GM12878 (cell line): ENCODE measurements at regions of chr16 and their contacts with region 1.

Region 1: GRCh38 chr16:13436641-13437412 is 483.1 kb upstream of the ERCC4 start:
- DNase-seq: peak; percentile 86
- ATAC-seq: peak; percentile 85
- H3K4me3 ChIP-seq: no peak overlapping the region
- H3K27ac ChIP-seq: peak overlapping the region; percentile 46
- H3K4me1 ChIP-seq: peaks cover 25% of the 10 kb centered on the region
- H3K27me3 ChIP-seq: no peaks in the 10 kb centered on the region
- CTCF ChIP-seq: no peak; a peak in 1 of 6 replicates
- EP300 ChIP-seq: peak; percentile 53 to 88; a peak in 3 of 4 replicates
- POLR2A ChIP-seq: no peak
- RAD21 ChIP-seq: peak; percentile 13; the same call in 1 of the 2 replicates

Region 2: DNA sequence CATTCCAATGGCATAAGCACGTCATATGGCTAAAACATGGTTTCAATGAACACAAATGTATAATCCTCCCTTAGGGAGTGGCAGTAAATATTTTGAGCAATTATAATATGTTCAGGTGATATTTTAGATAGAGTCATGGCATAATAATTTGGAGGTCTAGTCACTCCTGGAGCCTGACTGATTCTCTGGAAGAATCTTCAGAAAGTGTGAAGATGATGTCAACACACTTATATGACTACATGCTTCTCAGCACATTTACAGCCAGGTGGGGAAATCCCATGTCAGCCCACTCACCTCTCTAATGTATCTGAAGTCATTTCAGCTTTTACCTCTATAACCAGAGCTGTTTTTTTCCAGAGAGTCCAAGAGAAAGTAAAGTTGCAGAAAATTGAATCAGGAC is 60.7 kb before region 1 on chr16:
- CTCF ChIA-PET with region 1: no interaction called
- POLR2A ChIA-PET with region 1: no interaction called
- RAD21 ChIA-PET with region 1: interaction called, 12 read pairs
- SMC1A ChIA-PET with region 1: interaction called, 9 read pairs
- in situ Hi-C with region 1: no loop called
- intact Hi-C with region 1: no loop called
- DNase-seq: no peak
- ATAC-seq: peak; percentile 84
- H3K4me3 ChIP-seq: no peak overlapping the region
- H3K27ac ChIP-seq: no peak overlapping the region
- H3K4me1 ChIP-seq: no peaks in the 10 kb centered on the region; the same call in 1 of the 2 replicates
- H3K27me3 ChIP-seq: no peaks in the 10 kb centered on the region
- CTCF ChIP-seq: no peak
- EP300 ChIP-seq: peak in 1 of 2 experiments; percentile 29; a peak in 1 of 4 replicates
- POLR2A ChIP-seq: no peak
- RAD21 ChIP-seq: no peak

Region 3: GRCh38 chr16:13426269-13426668 is 10.6 kb before region 1 on chr16:
- CTCF ChIA-PET with region 1: interaction called, 7 read pairs
- POLR2A ChIA-PET with region 1: interaction called, 3 read pairs
- RAD21 ChIA-PET with region 1: interaction called, 4 read pairs
- SMC1A ChIA-PET with region 1: interaction called, 21 read pairs
- in situ Hi-C with region 1: no loop called
- intact Hi-C with region 1: no loop called
- DNase-seq: no peak
- ATAC-seq: peak; percentile 15; the same call in 1 of the 3 replicates
- H3K4me3 ChIP-seq: no peak overlapping the region
- H3K27ac ChIP-seq: no peak overlapping the region
- H3K4me1 ChIP-seq: no peaks in the 10 kb centered on the region; the same call in 1 of the 2 replicates
- H3K27me3 ChIP-seq: no peaks in the 10 kb centered on the region
- CTCF ChIP-seq: peak in 1 of 3 experiments; percentile 10; a peak in 1 of 6 replicates
- EP300 ChIP-seq: no peak
- POLR2A ChIP-seq: no peak
- RAD21 ChIP-seq: peak; percentile 39; the same call in 1 of the 2 replicates

Region 4: GRCh38 chr16:13552062-13552959 is 115.5 kb after region 1 on chr16:
- CTCF ChIA-PET with region 1: interaction called, 4 read pairs
- POLR2A ChIA-PET with region 1: interaction called, 5 read pairs
- RAD21 ChIA-PET with region 1: interaction called, 19 read pairs
- SMC1A ChIA-PET with region 1: interaction called, 12 read pairs
- in situ Hi-C with region 1: no loop called
- intact Hi-C with region 1: no loop called
- DNase-seq: peak; percentile 71
- ATAC-seq: no peak; the same call in 1 of the 3 replicates
- H3K4me3 ChIP-seq: no peak overlapping the region
- H3K27ac ChIP-seq: no peak overlapping the region
- H3K4me1 ChIP-seq: no peaks in the 10 kb centered on the region
- H3K27me3 ChIP-seq: no peaks in the 10 kb centered on the region
- CTCF ChIP-seq: no peak
- EP300 ChIP-seq: 0 out of 4 replicates have a peak, but pooled peaks of 1 of the 2 experiments have one; percentile 46
- POLR2A ChIP-seq: no peak
- RAD21 ChIP-seq: no peak